Activated CD8-positive, alpha-beta T cell treated with anti-CD3 and anti-CD28 coated beads for 36 hours (primary cell): ENCODE measurements at regions of chr10 and their contacts with region 1.

Region 1: DNA sequence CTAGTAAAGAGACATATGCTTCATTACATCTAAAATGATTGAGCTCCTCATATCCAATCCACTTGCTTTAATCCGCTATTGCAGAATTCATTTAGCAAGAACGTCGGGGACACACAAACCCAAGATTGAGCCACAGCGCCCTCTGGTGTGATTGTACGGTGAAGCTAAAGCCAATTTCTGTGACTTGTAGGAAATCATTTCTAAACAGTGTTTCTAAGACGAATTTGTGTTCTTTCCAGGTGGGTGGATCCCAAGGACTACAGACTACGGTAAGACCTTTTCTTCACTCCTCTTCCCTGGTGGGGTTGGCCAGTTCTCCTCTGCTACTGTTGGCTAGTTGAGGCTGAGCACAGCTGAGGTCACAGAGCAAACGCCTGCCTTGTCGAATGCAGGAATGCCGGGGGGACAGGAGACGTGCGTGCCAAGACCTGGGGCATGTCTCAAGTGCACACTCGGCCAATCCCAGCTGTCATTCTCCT is 5.2 kb downstream of the DMBT1 start:
- DNase-seq: peak; percentile 87
- ATAC-seq: peak; percentile 34
- H3K4me3 Mint-ChIP-seq: no peak overlapping the region
- H3K27ac Mint-ChIP-seq: no peak overlapping the region
- H3K4me1 Mint-ChIP-seq: peaks cover 7% of the 10 kb centered on the region
- H3K27me3 Mint-ChIP-seq: peaks cover 29% of the 10 kb centered on the region
- CTCF ChIP-seq: peak; percentile 78

Region 2: GRCh38 chr10:121310151-121310711 is 1255.5 kb before region 1 on chr10:
- CTCF ChIA-PET with region 1: no interaction called
- POLR2A ChIA-PET with region 1: no interaction called
- intact Hi-C with region 1: no loop called
- DNase-seq: no peak
- ATAC-seq: no peak
- H3K4me3 Mint-ChIP-seq: no peak overlapping the region
- H3K27ac Mint-ChIP-seq: no peak overlapping the region
- H3K4me1 Mint-ChIP-seq: no peaks in the 10 kb centered on the region
- H3K27me3 Mint-ChIP-seq: no peaks in the 10 kb centered on the region
- CTCF ChIP-seq: no peak

Region 3: GRCh38 chr10:122342293-122343134 is 223.3 kb before region 1 on chr10:
- CTCF ChIA-PET with region 1: interaction called, 17 read pairs
- POLR2A ChIA-PET with region 1: no interaction called
- intact Hi-C with region 1: loop called (anchors 5 kb)
- DNase-seq: peak; percentile 74
- ATAC-seq: peak; percentile 79
- H3K4me3 Mint-ChIP-seq: no peak overlapping the region
- H3K27ac Mint-ChIP-seq: no peak overlapping the region
- H3K4me1 Mint-ChIP-seq: peaks cover 11% of the 10 kb centered on the region
- H3K27me3 Mint-ChIP-seq: peaks cover 1% of the 10 kb centered on the region
- CTCF ChIP-seq: peak; percentile 84

Region 4: GRCh38 chr10:122450353-122450990 is 115.3 kb before region 1 on chr10:
- CTCF ChIA-PET with region 1: interaction called, 12 read pairs
- POLR2A ChIA-PET with region 1: no interaction called
- intact Hi-C with region 1: loop called (anchors 10 kb)
- DNase-seq: no peak
- ATAC-seq: no peak
- H3K4me3 Mint-ChIP-seq: no peak overlapping the region
- H3K27ac Mint-ChIP-seq: no peak overlapping the region
- H3K4me1 Mint-ChIP-seq: no peaks in the 10 kb centered on the region
- H3K27me3 Mint-ChIP-seq: peaks cover 7% of the 10 kb centered on the region
- CTCF ChIP-seq: no peak

Region 5: GRCh38 chr10:122495406-122496340 is 70.1 kb before region 1 on chr10:
- CTCF ChIA-PET with region 1: interaction called, 12 read pairs
- POLR2A ChIA-PET with region 1: no interaction called
- intact Hi-C with region 1: no loop called
- DNase-seq: peak; percentile 26
- ATAC-seq: no peak
- H3K4me3 Mint-ChIP-seq: no peak overlapping the region
- H3K27ac Mint-ChIP-seq: no peak overlapping the region
- H3K4me1 Mint-ChIP-seq: peaks cover 21% of the 10 kb centered on the region
- H3K27me3 Mint-ChIP-seq: peaks cover 4% of the 10 kb centered on the region
- CTCF ChIP-seq: no peak

Region 6: DNA sequence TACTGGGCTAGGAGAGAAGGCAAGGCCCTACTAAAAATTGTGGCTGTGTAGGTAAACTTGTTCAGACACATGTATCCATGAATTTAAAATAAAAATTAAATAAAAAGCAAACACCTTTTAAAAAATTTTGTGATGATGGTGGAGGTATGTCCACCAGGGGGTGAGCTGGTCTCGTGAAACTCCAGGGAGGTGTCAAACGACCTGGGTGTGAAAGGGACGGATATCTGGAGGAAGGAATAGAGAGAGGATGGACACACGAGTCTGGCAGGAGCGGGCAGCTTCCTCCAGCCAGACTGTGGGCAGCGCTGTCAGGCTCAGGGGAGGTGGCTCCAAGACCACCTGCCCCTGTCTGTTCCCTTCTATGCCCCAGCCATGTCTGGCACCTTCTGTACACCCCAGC is 40.0 kb before region 1 on chr10:
- CTCF ChIA-PET with region 1: interaction called, 21 read pairs
- POLR2A ChIA-PET with region 1: no interaction called
- intact Hi-C with region 1: no loop called
- DNase-seq: peak; percentile 21
- ATAC-seq: no peak
- H3K4me3 Mint-ChIP-seq: no peak overlapping the region
- H3K27ac Mint-ChIP-seq: no peak overlapping the region
- H3K4me1 Mint-ChIP-seq: no peaks in the 10 kb centered on the region
- H3K27me3 Mint-ChIP-seq: peaks cover 2% of the 10 kb centered on the region
- CTCF ChIP-seq: no peak